Activated CD8-positive, alpha-beta memory T cell treated with anti-CD3 and anti-CD28 coated beads, Interleukin-2, amount 10 ng/mL, durations not matched to agents 7 days and 5 days (primary cell): ENCODE measurements at regions of chr6 and their contacts with region 1.

Region 1: DNA sequence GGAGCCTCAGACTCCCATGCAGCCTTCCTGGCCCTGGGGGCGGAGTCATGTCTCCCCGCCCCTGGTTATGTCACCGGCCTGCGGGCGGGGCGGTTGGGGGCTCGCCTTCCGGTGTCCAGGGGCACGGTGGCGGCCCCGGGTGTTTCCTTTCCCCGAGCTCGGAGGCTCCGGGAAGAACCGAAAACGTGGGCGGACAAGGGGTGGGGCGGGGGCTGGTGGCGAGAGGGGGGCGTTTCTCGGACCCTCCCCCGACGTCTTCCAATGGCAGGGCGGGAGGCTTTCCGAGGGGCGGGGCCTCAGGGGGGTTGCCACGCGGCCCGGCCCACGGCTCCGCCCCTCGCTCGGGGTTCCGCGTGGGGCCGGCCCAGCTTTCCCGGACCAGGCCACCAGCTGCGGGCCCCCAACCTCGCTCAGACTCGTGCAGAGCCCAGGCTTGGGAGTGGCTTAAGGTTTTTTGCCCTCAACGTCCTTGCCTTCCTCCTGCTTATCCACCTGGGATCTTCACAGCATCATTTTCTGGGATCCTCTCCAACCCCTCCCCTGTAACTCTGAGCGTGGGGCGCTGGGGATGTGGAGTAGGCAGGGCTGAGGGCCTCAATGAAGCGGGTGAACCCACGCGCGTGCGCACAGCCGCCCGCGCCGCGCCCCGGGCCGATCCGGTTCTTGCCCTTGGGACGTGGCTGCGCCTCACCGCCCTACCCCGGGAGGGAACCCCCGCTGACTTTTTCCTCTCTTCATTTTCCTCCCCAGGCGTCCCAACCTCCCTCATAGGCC is 2.1 kb upstream of the NRN1 start:
- DNase-seq: peak; percentile 83
- ATAC-seq: peak; percentile 78
- H3K4me3 Mint-ChIP-seq: peak overlapping the region; percentile 69
- H3K27ac Mint-ChIP-seq: peak overlapping the region; percentile 52
- H3K4me1 Mint-ChIP-seq: peaks cover 32% of the 10 kb centered on the region
- H3K27me3 Mint-ChIP-seq: peaks cover 78% of the 10 kb centered on the region

Region 2: GRCh38 chr6:5922230-5922629 is 86.6 kb before region 1 on chr6:
- CTCF ChIA-PET with region 1: no interaction called
- DNase-seq: no peak
- ATAC-seq: no peak
- H3K4me3 Mint-ChIP-seq: no peak overlapping the region
- H3K27ac Mint-ChIP-seq: no peak overlapping the region
- H3K4me1 Mint-ChIP-seq: no peaks in the 10 kb centered on the region
- H3K27me3 Mint-ChIP-seq: peaks cover 27% of the 10 kb centered on the region

Region 3: GRCh38 chr6:5995949-5996713 is 12.7 kb before region 1 on chr6:
- CTCF ChIA-PET with region 1: interaction called, 13 read pairs
- DNase-seq: no peak
- ATAC-seq: peak; percentile 40
- H3K4me3 Mint-ChIP-seq: peak overlapping the region; percentile 80
- H3K27ac Mint-ChIP-seq: peak overlapping the region; percentile 49
- H3K4me1 Mint-ChIP-seq: peaks cover 44% of the 10 kb centered on the region
- H3K27me3 Mint-ChIP-seq: peaks cover 94% of the 10 kb centered on the region